ENCODE measurements at regions of chr4 and their contacts with region 1.

Region 1: GRCh38 chr4:184745831-184746795 is 12.2 kb upstream of the CENPU start:
- DNase-seq: peak; percentile 55 to 85 (median 70)
- ATAC-seq: peak; percentile 97
- H3K4me3 ChIP-seq: no peak overlapping the region
- H3K4me3 Mint-ChIP-seq: peak overlapping the region; percentile 40
- H3K27ac ChIP-seq: no peak overlapping the region
- H3K27ac Mint-ChIP-seq: peak overlapping the region; percentile 87
- H3K4me1 ChIP-seq: peaks cover 12% of the 10 kb centered on the region
- H3K4me1 Mint-ChIP-seq: peaks cover 18% of the 10 kb centered on the region
- H3K27me3 ChIP-seq: no peaks in the 10 kb centered on the region
- H3K27me3 Mint-ChIP-seq: no peaks in the 10 kb centered on the region
- CTCF ChIP-seq: peak; percentile 79

Region 2: GRCh38 chr4:184733654-184734524 is 12.2 kb before region 1 on chr4 and contains the start of gene CENPU:
- CTCF ChIA-PET with region 1: interaction called, 9 read pairs
- POLR2A ChIA-PET with region 1: interaction called, 17 read pairs
- intact Hi-C with region 1: no loop called
- DNase-seq: peak; percentile 91 to 98 (median 93)
- ATAC-seq: peak; percentile 97
- H3K4me3 ChIP-seq: peak within 1 kb of the TSS; percentile 87
- H3K4me3 Mint-ChIP-seq: peak within 1 kb of the TSS; percentile 93
- H3K27ac ChIP-seq: no peak within 1 kb of the TSS
- H3K27ac Mint-ChIP-seq: peak within 1 kb of the TSS; percentile 74
- H3K4me1 ChIP-seq: peaks cover 13% of the 10 kb centered on the region
- H3K4me1 Mint-ChIP-seq: peaks cover 17% of the 10 kb centered on the region
- H3K27me3 ChIP-seq: no peaks in the 10 kb centered on the region
- H3K27me3 Mint-ChIP-seq: no peaks in the 10 kb centered on the region
- CTCF ChIP-seq: no peak
- total RNA-seq, gene CENPU: 1.9 to 2.8 TPM

Region 3: GRCh38 chr4:184825896-184826690 is 80.0 kb after region 1 on chr4 and contains the start of gene ACSL1:
- CTCF ChIA-PET with region 1: no interaction called
- POLR2A ChIA-PET with region 1: no interaction called
- intact Hi-C with region 1: loop called (anchors 5 kb)
- DNase-seq: peak; percentile 58 to 90 (median 72)
- ATAC-seq: peak; percentile 85
- H3K4me3 ChIP-seq: peak within 1 kb of the TSS; percentile 59
- H3K4me3 Mint-ChIP-seq: peak within 1 kb of the TSS; percentile 97
- H3K27ac ChIP-seq: peak within 1 kb of the TSS in 1 of 2 donors; percentile 31
- H3K27ac Mint-ChIP-seq: peak within 1 kb of the TSS; percentile 92
- H3K4me1 ChIP-seq: peaks cover 23% of the 10 kb centered on the region
- H3K4me1 Mint-ChIP-seq: peaks cover 40% of the 10 kb centered on the region
- H3K27me3 ChIP-seq: no peaks in the 10 kb centered on the region
- H3K27me3 Mint-ChIP-seq: no peaks in the 10 kb centered on the region
- CTCF ChIP-seq: no peak
- total RNA-seq, gene ACSL1: 12.4 to 12.5 TPM

Region 4: GRCh38 chr4:184961660-184962059 is 215.5 kb after region 1 on chr4:
- CTCF ChIA-PET with region 1: no interaction called
- POLR2A ChIA-PET with region 1: no interaction called
- intact Hi-C with region 1: no loop called
- DNase-seq: no peak
- ATAC-seq: no peak
- H3K4me3 ChIP-seq: no peak overlapping the region
- H3K4me3 Mint-ChIP-seq: no peak overlapping the region
- H3K27ac ChIP-seq: no peak overlapping the region
- H3K27ac Mint-ChIP-seq: no peak overlapping the region
- H3K4me1 ChIP-seq: no peaks in the 10 kb centered on the region
- H3K4me1 Mint-ChIP-seq: peaks cover 11% of the 10 kb centered on the region
- H3K27me3 ChIP-seq: peaks cover 0 to 3% of the 10 kb centered on the region in 2 experiments
- H3K27me3 Mint-ChIP-seq: peaks cover 5% of the 10 kb centered on the region
- CTCF ChIP-seq: no peak

Region 5: GRCh38 chr4:184983672-184984356 is 237.7 kb after region 1 on chr4:
- CTCF ChIA-PET with region 1: no interaction called
- POLR2A ChIA-PET with region 1: no interaction called
- intact Hi-C with region 1: loop called in 1 of 2 experiments (anchors 5 kb)
- DNase-seq: peak in 13 of 14 experiments; percentile 17 to 79 (median 56)
- ATAC-seq: peak; percentile 74
- H3K4me3 ChIP-seq: peak overlapping the region; percentile 43
- H3K4me3 Mint-ChIP-seq: no peak overlapping the region
- H3K27ac ChIP-seq: no peak overlapping the region
- H3K27ac Mint-ChIP-seq: no peak overlapping the region
- H3K4me1 ChIP-seq: peaks cover 22% of the 10 kb centered on the region
- H3K4me1 Mint-ChIP-seq: no peaks in the 10 kb centered on the region
- H3K27me3 ChIP-seq: no peaks in the 10 kb centered on the region
- H3K27me3 Mint-ChIP-seq: peaks cover 3% of the 10 kb centered on the region
- CTCF ChIP-seq: no peak

Region 6: DNA sequence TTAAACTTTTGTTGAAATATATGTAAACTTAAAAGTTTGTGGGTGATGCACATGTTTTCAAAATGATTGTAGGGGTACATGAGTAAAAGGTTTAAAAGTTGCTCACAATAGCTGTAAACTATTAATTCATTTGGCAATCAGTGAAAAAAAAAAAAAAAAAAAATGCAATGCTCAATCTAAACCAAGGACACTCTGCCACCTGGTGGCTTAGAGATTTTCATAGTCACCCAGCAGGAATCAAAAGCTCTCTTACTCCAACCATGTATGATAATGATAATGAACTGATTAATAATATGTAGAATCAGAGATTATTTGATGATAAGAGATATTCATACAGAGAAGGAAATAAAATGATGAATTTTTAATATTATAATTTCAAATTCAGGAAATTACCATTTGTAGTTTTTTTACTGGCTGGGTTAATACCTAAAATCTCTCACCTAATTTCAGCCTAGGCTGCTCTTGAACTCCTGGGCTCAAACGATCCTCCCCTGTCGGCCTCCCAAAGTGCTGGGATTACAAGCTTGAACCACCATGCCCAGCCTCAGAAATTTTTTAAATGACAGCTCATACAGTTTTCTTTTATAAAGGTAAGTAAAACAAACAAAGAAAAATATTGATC is 350.0 kb after region 1 on chr4:
- CTCF ChIA-PET with region 1: interaction called, 6 read pairs
- POLR2A ChIA-PET with region 1: no interaction called
- intact Hi-C with region 1: loop called (anchors 2 kb)
- DNase-seq: peak in 5 of 14 experiments; percentile 4 to 49 (median 36)
- ATAC-seq: no peak
- H3K4me3 ChIP-seq: no peak overlapping the region
- H3K4me3 Mint-ChIP-seq: no peak overlapping the region
- H3K27ac ChIP-seq: no peak overlapping the region
- H3K27ac Mint-ChIP-seq: no peak overlapping the region
- H3K4me1 ChIP-seq: no peaks in the 10 kb centered on the region
- H3K4me1 Mint-ChIP-seq: no peaks in the 10 kb centered on the region
- H3K27me3 ChIP-seq: peaks cover 11 to 15% of the 10 kb centered on the region in 2 experiments
- H3K27me3 Mint-ChIP-seq: peaks cover 47% of the 10 kb centered on the region
- CTCF ChIP-seq: peak; percentile 57

Region 7: GRCh38 chr4:185115827-185116232 is 369.7 kb after region 1 on chr4:
- CTCF ChIA-PET with region 1: no interaction called
- POLR2A ChIA-PET with region 1: no interaction called
- intact Hi-C with region 1: no loop called
- DNase-seq: no peak
- ATAC-seq: no peak
- H3K4me3 ChIP-seq: no peak overlapping the region
- H3K4me3 Mint-ChIP-seq: no peak overlapping the region
- H3K27ac ChIP-seq: no peak overlapping the region
- H3K27ac Mint-ChIP-seq: no peak overlapping the region
- H3K4me1 ChIP-seq: no peaks in the 10 kb centered on the region
- H3K4me1 Mint-ChIP-seq: no peaks in the 10 kb centered on the region
- H3K27me3 ChIP-seq: peaks cover 0 to 4% of the 10 kb centered on the region in 2 experiments
- H3K27me3 Mint-ChIP-seq: peaks cover 9% of the 10 kb centered on the region
- CTCF ChIP-seq: no peak

Measured in CD4-positive, alpha-beta T cell (primary cell).